Stomach (tissue), 19 donors: ENCODE measurements at regions of chrX and their contacts with region 1.

Region 1: DNA sequence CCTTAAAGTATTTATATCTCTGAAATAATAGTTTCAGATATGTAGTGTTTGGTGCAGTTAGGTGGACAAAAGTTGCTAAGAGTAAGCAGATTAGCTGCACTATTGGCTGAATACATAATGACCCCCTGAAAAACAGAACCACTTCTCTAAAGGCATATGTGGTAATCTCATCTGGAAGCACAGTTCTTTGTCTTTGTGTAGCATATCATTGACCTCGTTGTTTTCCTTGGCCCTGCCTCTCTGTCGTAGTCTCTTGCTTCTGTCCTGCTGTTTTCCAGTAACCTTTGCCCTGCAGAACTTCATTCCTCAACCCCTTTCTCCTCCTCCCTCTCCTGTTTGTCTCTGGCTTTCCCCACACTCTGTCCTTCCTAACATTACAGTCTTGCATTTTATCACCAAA is 41.4 kb downstream of the JADE3 start:
- DNase-seq: peak in 1 of 2 donors; percentile 30
- H3K4me3 ChIP-seq: no peak overlapping the region
- H3K27ac ChIP-seq: no peak overlapping the region
- H3K4me1 ChIP-seq: peaks cover 0 to 16% (median 12%) of the 10 kb centered on the region in 4 donors
- H3K27me3 ChIP-seq: peaks cover 0 to 3% (median 0%) of the 10 kb centered on the region in 3 donors
- CTCF ChIP-seq: no peak
- EP300 ChIP-seq: no peak
- POLR2A ChIP-seq: no peak

Region 2: DNA sequence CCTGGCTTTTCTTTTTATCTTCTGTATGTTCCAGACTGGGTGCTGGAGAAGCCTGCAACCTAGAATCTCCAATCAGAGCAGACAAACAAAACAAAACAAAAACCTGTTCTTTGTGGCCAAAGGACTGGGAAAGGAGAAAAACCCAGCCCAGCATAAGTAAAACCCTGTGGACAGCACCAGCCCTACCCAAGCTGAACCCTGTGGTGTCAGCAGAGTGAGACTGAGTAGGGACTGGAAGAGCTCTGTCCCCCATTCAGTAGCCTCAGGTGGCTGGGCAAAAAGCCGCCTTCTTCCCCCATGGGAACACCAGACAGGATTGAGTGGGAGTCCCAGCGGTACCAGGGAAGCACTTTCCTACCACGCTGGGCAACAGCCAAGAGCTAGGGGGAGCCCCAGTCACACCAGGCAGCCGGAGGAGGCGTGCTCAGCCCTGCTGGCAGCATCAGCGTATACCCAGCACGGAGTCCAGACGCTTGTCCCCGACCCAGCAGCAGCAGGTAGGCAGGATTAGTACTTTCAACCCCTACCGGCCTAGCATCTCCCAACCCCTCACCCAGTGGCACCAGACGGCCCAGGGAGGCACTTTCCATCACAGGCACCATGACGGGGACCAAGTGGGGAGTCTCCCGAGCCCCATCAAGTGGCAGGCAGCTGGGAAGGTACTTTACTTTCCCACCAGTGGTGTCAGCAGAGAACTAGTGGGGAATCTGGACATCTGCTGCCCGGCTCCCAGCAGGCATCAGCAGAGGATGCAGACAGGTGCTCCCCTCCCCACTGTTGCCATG is 49.9 kb before region 1 on chrX:
- intact Hi-C with region 1: loop called (anchors 10 kb)
- DNase-seq: peak; percentile 87 to 90
- H3K4me3 ChIP-seq: peak overlapping the region; percentile 36 to 52 (median 41)
- H3K27ac ChIP-seq: peak overlapping the region in 3 of 5 donors; percentile 9 to 51 (median 40)
- H3K4me1 ChIP-seq: peaks cover 0 to 5% (median 2%) of the 10 kb centered on the region in 4 donors
- H3K27me3 ChIP-seq: peaks cover 0 to 14% (median 0%) of the 10 kb centered on the region in 3 donors
- CTCF ChIP-seq: peak in 5 of 7 experiments; percentile 45 to 86 (median 62)
- EP300 ChIP-seq: no peak
- POLR2A ChIP-seq: no peak